Naive thymus-derived CD4-positive, alpha-beta T cell (primary cell): ENCODE measurements at regions of chr2 and their contacts with region 1.

Region 1: DNA sequence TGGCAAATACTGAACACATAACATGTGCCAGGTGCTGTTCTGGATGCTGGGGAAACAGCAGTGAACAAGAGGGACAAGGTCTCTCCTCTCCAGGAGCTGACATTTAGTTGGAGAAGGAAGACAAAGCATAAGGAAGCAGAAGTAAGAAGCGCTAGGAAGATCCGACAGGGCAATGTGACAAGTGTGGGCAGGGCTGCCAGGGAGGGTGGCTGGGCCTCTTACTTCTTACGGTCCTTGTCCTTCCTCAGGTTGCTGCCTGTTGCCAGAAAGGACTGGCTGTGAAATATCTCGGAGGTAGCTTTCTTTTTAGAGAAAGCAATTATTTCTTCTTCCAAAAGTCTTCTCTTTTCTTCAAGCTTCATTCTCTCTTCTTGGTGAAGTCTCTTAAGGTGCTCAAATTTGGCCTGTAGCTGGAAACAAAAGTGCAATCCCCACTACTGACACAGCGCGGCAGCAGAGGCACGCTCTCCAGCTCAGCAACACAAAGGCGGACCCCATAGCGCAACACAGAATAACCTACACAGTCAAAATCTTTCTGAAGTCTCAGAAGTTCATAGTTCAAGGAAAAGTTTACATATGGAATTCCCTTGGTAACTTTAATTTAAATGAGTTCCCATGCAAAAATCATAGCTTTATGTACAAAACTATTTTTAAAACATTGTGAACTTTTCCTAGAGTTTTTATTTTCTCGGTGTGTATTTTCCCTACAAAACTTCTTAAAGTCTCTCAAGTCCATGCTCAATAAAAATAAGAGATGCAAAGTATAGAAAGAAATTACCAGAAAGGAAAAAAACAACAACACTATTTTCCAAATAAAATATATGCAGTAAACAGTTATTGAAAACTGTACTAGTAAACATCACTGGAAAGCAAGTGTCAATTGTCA is 67.7 kb downstream of the SEPTIN10 start:
- DNase-seq: peak; percentile 26 to 55 (median 48)
- ATAC-seq: peak; percentile 82
- H3K4me3 ChIP-seq: no peak overlapping the region
- H3K4me3 Mint-ChIP-seq: no peak overlapping the region
- H3K27ac ChIP-seq: no peak overlapping the region
- H3K27ac Mint-ChIP-seq: no peak overlapping the region
- H3K4me1 ChIP-seq: no peaks in the 10 kb centered on the region
- H3K4me1 Mint-ChIP-seq: no peaks in the 10 kb centered on the region
- H3K27me3 ChIP-seq: no peaks in the 10 kb centered on the region
- H3K27me3 Mint-ChIP-seq: peaks cover 0 to 26% (median 0%) of the 10 kb centered on the region in 5 donors

Region 2: GRCh38 chr2:108460345-108461037 is 1085.6 kb before region 1 on chr2:
- CTCF ChIA-PET with region 1: no interaction called
- POLR2A ChIA-PET with region 1: no interaction called
- intact Hi-C with region 1: no loop called
- DNase-seq: no peak
- ATAC-seq: no peak
- H3K4me3 ChIP-seq: no peak overlapping the region
- H3K4me3 Mint-ChIP-seq: peak overlapping the region in 4 of 10 donors; percentile 2 to 28 (median 22)
- H3K27ac ChIP-seq: no peak overlapping the region
- H3K27ac Mint-ChIP-seq: peak overlapping the region in 6 of 9 donors; percentile 14 to 69 (median 29)
- H3K4me1 ChIP-seq: peaks cover 0 to 3% of the 10 kb centered on the region in 2 donors
- H3K4me1 Mint-ChIP-seq: peaks cover 27 to 82% (median 74%) of the 10 kb centered on the region in 7 donors
- H3K27me3 ChIP-seq: no peaks in the 10 kb centered on the region
- H3K27me3 Mint-ChIP-seq: no peaks in the 10 kb centered on the region

Region 3: GRCh38 chr2:109195193-109196045 is 350.7 kb before region 1 on chr2:
- CTCF ChIA-PET with region 1: no interaction called
- POLR2A ChIA-PET with region 1: no interaction called
- intact Hi-C with region 1: no loop called
- DNase-seq: no peak
- ATAC-seq: no peak
- H3K4me3 ChIP-seq: no peak overlapping the region
- H3K4me3 Mint-ChIP-seq: no peak overlapping the region
- H3K27ac ChIP-seq: no peak overlapping the region
- H3K27ac Mint-ChIP-seq: no peak overlapping the region
- H3K4me1 ChIP-seq: no peaks in the 10 kb centered on the region
- H3K4me1 Mint-ChIP-seq: peaks cover 0 to 21% (median 7%) of the 10 kb centered on the region in 7 donors
- H3K27me3 ChIP-seq: no peaks in the 10 kb centered on the region
- H3K27me3 Mint-ChIP-seq: peaks cover 0 to 38% (median 0%) of the 10 kb centered on the region in 5 donors

Region 4: GRCh38 chr2:109715313-109715805 is 169.3 kb after region 1 on chr2:
- CTCF ChIA-PET with region 1: no interaction called
- POLR2A ChIA-PET with region 1: no interaction called
- intact Hi-C with region 1: loop called in 1 of 2 experiments (anchors 5 kb)
- DNase-seq: no peak
- ATAC-seq: no peak
- H3K4me3 ChIP-seq: no peak overlapping the region
- H3K4me3 Mint-ChIP-seq: no peak overlapping the region
- H3K27ac ChIP-seq: no peak overlapping the region
- H3K27ac Mint-ChIP-seq: no peak overlapping the region
- H3K4me1 ChIP-seq: no peaks in the 10 kb centered on the region
- H3K4me1 Mint-ChIP-seq: peaks cover 0 to 4% (median 0%) of the 10 kb centered on the region in 7 donors
- H3K27me3 ChIP-seq: no peaks in the 10 kb centered on the region
- H3K27me3 Mint-ChIP-seq: peaks cover 0 to 11% (median 4%) of the 10 kb centered on the region in 5 donors

Region 5: DNA sequence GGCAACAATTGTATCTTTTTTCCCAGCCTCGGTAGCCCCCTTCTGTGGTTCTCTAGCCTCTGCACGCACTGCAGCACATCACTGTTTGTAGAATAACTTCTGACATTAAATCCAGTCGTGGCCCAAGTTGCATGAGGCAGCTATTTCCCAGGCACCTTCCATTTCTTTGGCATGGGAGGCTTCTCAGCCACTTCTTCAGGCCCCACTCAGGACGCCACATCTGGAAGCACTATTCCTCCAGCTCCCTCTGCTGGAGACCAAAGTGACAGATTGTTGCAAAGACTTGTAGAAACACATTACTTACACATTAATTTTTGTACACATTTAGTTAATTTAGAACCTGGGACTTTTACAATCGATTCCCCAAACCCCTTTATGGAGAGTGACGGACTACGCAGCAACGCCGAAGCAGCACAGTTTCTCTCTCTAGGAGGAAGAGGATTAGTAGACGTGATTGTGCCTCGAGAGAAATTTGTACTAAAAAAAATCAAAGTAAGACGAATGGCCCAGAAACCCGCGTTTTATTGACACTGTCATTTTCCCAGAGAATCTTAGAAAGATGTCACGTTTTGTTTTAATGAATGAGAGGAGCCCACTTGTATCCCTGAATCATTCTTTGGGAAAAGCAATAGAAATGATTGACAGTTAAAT is 190.2 kb after region 1 on chr2:
- CTCF ChIA-PET with region 1: interaction called, 10 read pairs
- POLR2A ChIA-PET with region 1: no interaction called
- intact Hi-C with region 1: no loop called
- DNase-seq: peak in 2 of 9 donors; percentile 6 to 29
- ATAC-seq: no peak
- H3K4me3 ChIP-seq: no peak overlapping the region
- H3K4me3 Mint-ChIP-seq: no peak overlapping the region
- H3K27ac ChIP-seq: no peak overlapping the region
- H3K27ac Mint-ChIP-seq: no peak overlapping the region
- H3K4me1 ChIP-seq: no peaks in the 10 kb centered on the region
- H3K4me1 Mint-ChIP-seq: no peaks in the 10 kb centered on the region
- H3K27me3 ChIP-seq: no peaks in the 10 kb centered on the region
- H3K27me3 Mint-ChIP-seq: peaks cover 6 to 22% (median 11%) of the 10 kb centered on the region in 5 donors